GM18951 (cell line): ENCODE measurements at regions of chr5 and their contacts with region 1.

Region 1: DNA sequence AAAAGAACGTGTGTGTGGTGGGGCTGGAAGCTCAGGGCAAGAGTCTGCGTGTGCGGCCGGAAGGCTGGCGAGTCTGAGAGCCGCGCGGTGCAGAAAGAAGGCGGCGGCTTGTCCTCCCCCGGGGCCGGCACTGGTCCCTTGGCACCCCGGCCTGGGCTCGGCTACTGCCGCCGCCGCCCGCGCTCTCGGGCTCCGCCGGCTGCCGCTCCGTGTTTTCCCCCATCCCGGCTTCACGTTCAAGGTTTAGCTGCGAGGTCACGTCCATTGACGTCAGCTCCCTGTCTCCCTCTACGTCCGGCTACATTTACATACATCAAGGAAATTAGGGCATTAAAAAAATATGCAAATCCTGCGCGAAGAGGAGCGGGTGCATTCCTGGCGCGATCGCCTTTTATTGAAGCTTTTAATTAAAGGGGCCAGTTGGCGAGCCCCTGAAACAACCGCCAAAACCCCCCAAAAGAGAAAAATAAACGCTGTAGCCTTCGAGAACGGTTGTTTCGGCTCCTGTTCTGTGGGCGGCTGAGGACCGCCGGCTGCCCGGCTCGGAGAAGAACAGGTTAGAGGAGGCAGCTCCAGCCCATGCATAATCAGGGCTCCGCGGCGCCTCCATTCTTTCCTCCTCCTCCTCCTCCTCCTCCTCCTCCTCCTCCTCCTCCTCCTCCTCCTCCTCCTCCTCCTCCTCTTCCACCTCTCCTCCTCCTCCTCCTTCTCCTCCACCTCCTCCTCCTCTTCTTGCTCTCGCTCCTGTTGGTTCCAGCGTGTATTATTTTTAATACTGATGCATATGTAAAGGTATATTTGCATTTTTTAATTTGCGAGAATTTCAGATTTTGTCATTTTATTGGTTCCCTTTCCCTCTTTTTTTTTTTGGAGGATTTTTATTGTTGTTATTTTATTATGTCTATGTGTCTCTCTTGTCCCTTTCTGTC is 207.0 kb downstream of the MEF2C start:
- POLR2A ChIP-seq: no peak

Region 2: DNA sequence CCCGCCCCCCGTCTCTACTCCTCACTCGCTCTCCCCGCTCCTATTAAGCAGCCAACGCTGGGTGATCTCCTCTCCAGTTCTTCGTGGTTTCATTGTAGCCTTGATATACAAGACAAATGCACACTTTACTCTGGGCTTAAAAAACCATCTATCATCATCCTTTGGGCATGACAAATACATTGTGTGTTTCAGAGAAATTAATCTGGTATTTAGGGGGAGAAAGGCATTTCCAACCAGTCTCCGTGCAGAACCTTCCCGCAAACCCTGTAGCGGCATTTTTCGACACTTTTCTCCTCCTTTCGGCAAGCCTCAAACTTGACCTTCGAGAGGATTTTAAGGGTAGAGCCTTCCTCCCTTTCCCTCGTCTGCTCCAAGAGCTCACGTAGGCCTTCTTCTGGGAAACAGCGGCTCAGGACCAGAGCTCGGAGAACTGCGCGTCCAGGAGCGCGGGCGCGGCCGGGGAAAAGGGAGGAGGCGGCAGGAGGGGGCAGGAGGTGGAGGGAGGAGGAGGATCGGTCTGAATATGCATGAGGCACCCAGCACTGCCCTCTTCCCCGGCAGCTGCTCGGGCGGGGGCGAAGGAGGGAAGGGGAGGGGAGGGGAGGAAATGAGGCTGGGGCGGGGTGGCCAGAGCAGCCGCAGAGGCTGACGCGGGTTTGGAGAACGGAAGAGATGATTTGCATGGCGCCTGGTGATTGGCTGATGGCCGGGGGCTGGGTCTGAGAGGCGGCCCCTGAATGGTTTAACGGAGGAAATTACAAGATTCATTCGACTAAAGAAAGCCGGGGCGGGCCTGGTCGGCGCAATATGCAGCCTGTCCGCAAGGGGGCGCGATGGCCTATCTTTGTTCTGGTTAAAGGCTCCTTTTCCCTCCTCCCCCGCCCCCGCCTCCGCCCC is 534.9 kb before region 1 on chr5:
- in situ Hi-C with region 1: loop called (anchors 5 kb)
- POLR2A ChIP-seq: no peak

Region 3: DNA sequence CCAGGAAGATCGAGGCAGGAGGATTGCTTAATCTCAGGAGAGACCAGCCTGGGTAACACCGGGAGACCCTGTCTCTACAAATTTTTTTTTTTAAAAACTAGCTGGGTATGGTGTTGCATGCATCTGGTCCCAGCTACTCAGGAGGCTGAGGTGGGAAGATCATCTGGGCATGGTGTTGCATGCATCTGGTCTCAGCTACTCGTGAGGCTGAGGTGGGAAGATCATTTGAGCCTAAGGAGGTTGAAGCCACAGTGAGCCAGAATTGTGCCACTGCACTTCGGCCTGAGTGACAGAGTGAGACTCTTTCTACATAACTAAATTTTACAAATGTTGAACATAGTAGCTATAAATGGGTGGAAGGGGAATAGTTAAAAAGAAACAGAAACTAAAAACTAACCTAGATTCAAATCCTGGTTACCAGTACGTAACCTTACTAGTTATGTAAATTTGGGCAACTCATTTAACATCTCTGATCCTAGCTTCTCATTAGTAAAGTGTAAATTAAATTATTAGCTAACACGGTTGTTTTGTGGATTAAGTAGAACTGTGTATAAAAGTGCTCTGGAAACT is 449.0 kb before region 1 on chr5:
- in situ Hi-C with region 1: no loop called
- POLR2A ChIP-seq: no peak